Esophagus muscularis mucosa (tissue), 4 donors: ENCODE measurements at regions of chr11 and their contacts with region 1.

Region 1: DNA sequence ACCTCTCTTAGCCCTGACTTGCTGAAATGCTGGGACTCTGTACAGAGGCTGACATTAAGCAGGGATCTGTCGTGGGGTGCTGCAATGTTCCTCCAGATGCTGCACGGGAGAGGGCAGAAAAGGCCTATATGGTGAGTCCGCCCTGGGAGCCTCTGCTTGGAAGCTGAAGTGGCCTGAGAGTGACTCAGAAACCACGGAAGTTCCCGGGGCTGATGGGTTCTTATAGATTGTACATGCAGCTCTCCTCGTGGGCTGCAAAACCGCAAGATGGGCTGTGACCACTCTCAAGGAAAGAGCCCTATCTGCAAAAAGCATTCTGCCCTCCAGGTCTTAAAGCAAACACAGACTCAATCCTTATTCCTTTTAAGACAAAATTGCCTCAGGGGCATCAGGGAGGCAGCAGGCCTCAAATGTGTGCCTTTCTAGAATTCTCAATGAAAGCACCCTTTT is 5.8 kb upstream of the SLC43A3 start:
- DNase-seq: no peak
- H3K4me3 ChIP-seq: no peak overlapping the region
- H3K27ac ChIP-seq: peak overlapping the region in 2 of 4 donors; percentile 4 to 12
- H3K4me1 ChIP-seq: peaks cover 28 to 56% (median 44%) of the 10 kb centered on the region in 4 donors
- H3K27me3 ChIP-seq: no peaks in the 10 kb centered on the region
- CTCF ChIP-seq: no peak
- EP300 ChIP-seq: no peak
- POLR2A ChIP-seq: no peak

Region 2: DNA sequence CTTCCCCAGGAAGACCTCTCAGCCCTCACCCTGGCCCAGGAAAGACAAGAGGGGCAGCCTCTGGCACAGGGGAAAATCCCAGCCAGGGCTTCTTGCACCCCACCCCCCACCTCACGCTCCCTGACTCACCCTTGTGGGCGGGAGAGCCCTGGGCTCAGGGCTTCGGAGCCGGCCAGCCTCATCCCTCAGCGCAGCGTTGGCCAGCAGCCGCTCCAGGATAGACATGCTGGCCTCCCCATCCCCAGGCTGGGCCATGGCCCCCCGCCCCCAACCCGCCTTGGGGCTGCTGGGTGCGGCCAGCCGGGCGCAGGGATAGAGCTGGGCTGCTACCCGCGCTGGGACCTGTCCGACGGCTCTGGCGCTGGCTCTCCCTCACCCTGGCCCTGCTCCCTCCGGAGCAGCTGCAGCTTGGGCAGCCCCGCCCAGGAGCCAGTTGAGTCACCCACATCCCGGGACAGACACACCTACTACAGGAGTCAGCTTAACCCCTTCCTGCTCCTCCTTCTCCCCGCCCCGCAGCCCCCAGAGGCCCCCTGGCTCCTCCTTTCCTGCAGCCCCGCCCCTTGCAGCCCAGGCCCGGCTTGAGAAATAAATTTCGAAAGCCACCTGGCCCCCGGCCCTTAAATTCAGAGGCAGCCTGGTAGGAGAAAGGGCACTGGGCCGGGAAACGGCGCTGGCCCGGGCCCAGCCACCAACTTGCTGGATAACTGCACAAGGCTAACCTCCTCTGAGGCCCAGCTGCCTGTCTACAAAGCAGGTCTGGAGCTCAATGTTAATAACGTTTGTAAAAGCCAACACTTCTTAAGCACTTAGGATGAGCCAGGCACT is 121.4 kb before region 1 on chr11:
- intact Hi-C with region 1: no loop called
- DNase-seq: peak; percentile 98
- H3K4me3 ChIP-seq: peak overlapping the region; percentile 54 to 79 (median 59)
- H3K27ac ChIP-seq: peak overlapping the region; percentile 84 to 93 (median 88)
- H3K4me1 ChIP-seq: peaks cover 85 to 96% (median 94%) of the 10 kb centered on the region in 4 donors
- H3K27me3 ChIP-seq: no peaks in the 10 kb centered on the region
- CTCF ChIP-seq: no peak
- EP300 ChIP-seq: no peak
- POLR2A ChIP-seq: peak; percentile 82

Region 3: DNA sequence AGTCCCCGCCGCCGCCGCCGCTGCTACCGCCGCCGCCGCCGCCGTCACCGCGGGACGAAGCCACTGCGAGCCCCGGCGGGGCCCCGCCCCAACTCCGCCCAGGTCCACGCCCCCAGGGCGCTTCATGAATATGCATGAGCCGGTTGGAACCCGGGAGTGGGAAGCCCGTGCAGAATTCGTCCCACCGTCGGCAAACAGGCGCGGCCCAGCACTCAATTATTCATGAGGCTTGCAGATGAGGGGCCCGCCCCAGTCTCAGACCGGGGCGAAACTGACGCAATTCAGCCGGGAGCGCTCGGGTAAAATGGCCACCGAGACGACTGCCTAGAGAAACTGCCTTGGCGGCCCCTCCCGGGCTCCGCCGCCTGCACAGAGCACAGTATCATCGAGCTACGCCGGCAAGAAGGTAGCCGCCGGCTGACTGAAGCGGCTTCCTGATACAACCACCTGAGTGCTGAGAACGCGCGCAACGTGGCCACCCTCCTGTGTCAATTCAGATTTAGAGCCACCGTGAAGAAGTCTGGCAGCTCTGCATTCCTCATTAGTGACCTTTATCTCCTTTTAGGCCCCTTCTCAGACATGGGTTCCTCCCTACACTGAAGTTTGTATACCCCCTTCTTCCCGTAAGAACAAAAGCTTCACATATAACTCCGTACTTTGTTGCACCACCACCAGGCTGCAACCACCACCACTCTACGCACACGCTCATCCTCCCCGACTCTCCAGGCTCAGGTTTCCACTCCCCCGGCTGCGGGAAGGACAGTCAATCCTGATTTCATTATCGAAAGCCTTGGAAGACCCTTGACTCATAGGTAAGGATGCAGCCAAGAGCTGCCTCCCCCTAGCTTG is 107.6 kb before region 1 on chr11 and contains the start of gene TNKS1BP1:
- intact Hi-C with region 1: loop called (anchors 5 kb)
- DNase-seq: peak; percentile 99
- H3K4me3 ChIP-seq: peak within 1 kb of the TSS; percentile 79 to 91 (median 89)
- H3K27ac ChIP-seq: peak within 1 kb of the TSS; percentile 94 to 98 (median 98)
- H3K4me1 ChIP-seq: peaks cover 44 to 56% (median 55%) of the 10 kb centered on the region in 4 donors
- H3K27me3 ChIP-seq: no peaks in the 10 kb centered on the region
- CTCF ChIP-seq: no peak
- EP300 ChIP-seq: no peak
- POLR2A ChIP-seq: peak; percentile 70
- total RNA-seq, gene TNKS1BP1: 93.9 to 215 (median 124) TPM

Region 4: DNA sequence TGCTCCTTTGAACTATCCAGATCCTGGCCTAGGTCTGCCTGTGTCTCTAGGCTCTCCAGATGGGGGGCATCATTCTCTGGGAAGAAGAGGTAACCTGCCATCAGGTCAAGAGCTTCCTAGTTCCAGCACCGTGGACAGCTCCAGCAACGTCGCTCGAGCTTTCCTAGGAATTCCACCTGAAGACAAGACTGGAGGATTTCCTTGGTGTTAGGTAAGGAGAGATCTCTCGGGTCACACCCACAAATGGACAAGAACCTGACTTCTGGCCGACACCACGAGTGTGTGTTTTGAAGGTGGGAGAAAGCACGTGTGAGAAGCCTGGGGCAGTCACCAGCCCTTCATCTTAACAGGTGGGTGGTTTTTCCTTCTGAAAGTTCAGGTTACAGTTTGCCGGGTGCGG is 53.0 kb before region 1 on chr11:
- intact Hi-C with region 1: no loop called
- DNase-seq: no peak
- H3K4me3 ChIP-seq: no peak overlapping the region
- H3K27ac ChIP-seq: no peak overlapping the region
- H3K4me1 ChIP-seq: no peaks in the 10 kb centered on the region
- H3K27me3 ChIP-seq: peaks cover 0 to 18% (median 0%) of the 10 kb centered on the region in 4 donors
- CTCF ChIP-seq: no peak
- EP300 ChIP-seq: no peak
- POLR2A ChIP-seq: no peak

Region 5: GRCh38 chr11:57474017-57474802 is 41.5 kb after region 1 on chr11:
- intact Hi-C with region 1: no loop called
- DNase-seq: no peak
- H3K4me3 ChIP-seq: no peak overlapping the region
- H3K27ac ChIP-seq: no peak overlapping the region
- H3K4me1 ChIP-seq: peaks cover 8 to 19% (median 17%) of the 10 kb centered on the region in 4 donors
- H3K27me3 ChIP-seq: peaks cover 0 to 55% (median 6%) of the 10 kb centered on the region in 4 donors
- CTCF ChIP-seq: no peak
- EP300 ChIP-seq: no peak
- POLR2A ChIP-seq: no peak